HepG2 (cell line): ENCODE measurements at regions of chr17 and their contacts with region 1.

Region 1: GRCh38 chr17:50944054-50944901 is 78.1 kb upstream of the TOB1 start:
- DNase-seq: peak; percentile 97
- ATAC-seq: peak; percentile 85
- H3K4me3 ChIP-seq: peak overlapping the region; percentile 61 to 86 (median 73)
- H3K27ac ChIP-seq: peak overlapping the region; percentile 96
- H3K4me1 ChIP-seq: peaks cover 97% of the 10 kb centered on the region
- H3K27me3 ChIP-seq: no peaks in the 10 kb centered on the region
- CTCF ChIP-seq: peak; percentile 27
- EP300 ChIP-seq: peak; percentile 71 to 96; a peak in 2 of 4 replicates
- POLR2A ChIP-seq: peak; percentile 98 to 99
- RAD21 ChIP-seq: peak; percentile 80

Region 2: GRCh38 chr17:50853015-50853615 is 91.2 kb before region 1 on chr17:
- CTCF ChIA-PET with region 1: interaction called, 23 read pairs
- POLR2A ChIA-PET with region 1: interaction called, 220 read pairs
- in situ Hi-C with region 1: no loop called
- intact Hi-C with region 1: no loop called
- DNase-seq: peak; percentile 74
- ATAC-seq: peak; percentile 46
- H3K4me3 ChIP-seq: peak overlapping the region; percentile 29 to 64 (median 56); a peak in 5 of 6 replicates
- H3K27ac ChIP-seq: peak overlapping the region; percentile 49
- H3K4me1 ChIP-seq: peaks cover 76% of the 10 kb centered on the region
- H3K27me3 ChIP-seq: peaks cover 0 to 8% of the 10 kb centered on the region in 2 experiments; a peak in 2 of 5 replicates
- CTCF ChIP-seq: no peak
- EP300 ChIP-seq: peak in 1 of 2 experiments; percentile 77; a peak in 2 of 4 replicates
- POLR2A ChIP-seq: no peak
- RAD21 ChIP-seq: no peak

Region 3: GRCh38 chr17:50893183-50893993 is 50.9 kb before region 1 on chr17:
- CTCF ChIA-PET with region 1: no interaction called
- POLR2A ChIA-PET with region 1: interaction called, 43 read pairs
- in situ Hi-C with region 1: no loop called
- intact Hi-C with region 1: no loop called
- DNase-seq: peak; percentile 90
- ATAC-seq: peak; percentile 51
- H3K4me3 ChIP-seq: peak overlapping the region; percentile 52 to 72 (median 62)
- H3K27ac ChIP-seq: peak overlapping the region; percentile 84
- H3K4me1 ChIP-seq: peaks cover 81% of the 10 kb centered on the region
- H3K27me3 ChIP-seq: no peaks in the 10 kb centered on the region
- CTCF ChIP-seq: no peak
- EP300 ChIP-seq: peak in 1 of 2 experiments; percentile 86; a peak in 2 of 4 replicates
- POLR2A ChIP-seq: peak in 1 of 2 experiments; percentile 51; a peak in 2 of 4 replicates
- RAD21 ChIP-seq: no peak

Region 4: DNA sequence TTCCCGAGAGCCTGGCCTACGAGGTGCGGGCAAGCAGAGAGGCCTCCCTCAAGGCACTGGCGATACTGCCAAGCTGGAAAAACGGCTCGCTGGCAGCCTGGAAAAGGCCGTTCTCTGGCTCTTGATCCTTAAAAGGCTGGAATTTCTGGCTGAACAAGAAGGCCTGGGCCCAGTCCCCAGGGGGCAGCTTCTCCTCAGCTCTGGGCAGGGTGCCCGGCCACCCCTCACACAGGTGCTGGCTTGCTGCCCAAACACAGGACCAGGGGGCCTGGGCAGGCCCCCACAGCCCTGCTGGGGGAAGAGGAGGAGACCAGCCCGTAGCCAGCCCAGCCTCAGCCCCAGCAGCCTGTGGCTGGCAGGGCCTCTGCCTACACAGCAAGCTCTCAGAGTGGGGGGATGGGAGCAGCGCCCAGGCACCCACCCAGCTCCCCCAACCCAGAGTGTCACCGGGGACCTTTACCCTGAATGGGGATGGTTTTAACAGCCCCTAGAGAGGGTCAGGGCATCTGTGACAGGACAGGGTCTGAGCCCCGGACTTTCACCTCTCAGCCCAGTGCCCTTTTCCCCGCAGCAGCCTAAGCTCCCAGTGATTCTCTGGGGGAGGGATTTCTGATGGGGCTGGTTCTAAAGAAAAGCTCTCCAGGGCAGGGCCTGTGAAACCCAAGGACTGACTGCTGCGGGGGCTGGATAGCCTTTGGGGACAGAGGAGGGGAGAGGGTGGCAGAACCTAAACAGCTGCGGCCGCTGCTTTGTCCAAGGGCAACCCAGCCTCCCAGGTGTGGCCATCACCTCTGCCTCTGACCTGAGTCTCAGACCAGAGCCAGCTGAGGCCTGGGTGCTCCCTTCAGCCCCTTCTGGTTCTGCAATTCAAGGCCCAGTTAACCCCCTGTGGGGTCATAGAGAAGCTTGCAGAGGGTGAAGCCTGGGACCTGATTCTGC is 39.5 kb before region 1 on chr17:
- CTCF ChIA-PET with region 1: no interaction called
- POLR2A ChIA-PET with region 1: interaction called, 125 read pairs
- in situ Hi-C with region 1: loop called (anchors 5 kb)
- intact Hi-C with region 1: loop called (anchors 2 kb)
- DNase-seq: peak; percentile 78
- ATAC-seq: peak; percentile 74
- H3K4me3 ChIP-seq: peak overlapping the region; percentile 48 to 76 (median 52)
- H3K27ac ChIP-seq: peak overlapping the region; percentile 93
- H3K4me1 ChIP-seq: peaks cover 93% of the 10 kb centered on the region
- H3K27me3 ChIP-seq: no peaks in the 10 kb centered on the region
- CTCF ChIP-seq: peak; percentile 51
- EP300 ChIP-seq: peak in 1 of 2 experiments; percentile 58; a peak in 2 of 4 replicates
- POLR2A ChIP-seq: peak in 1 of 2 experiments; percentile 62; a peak in 1 of 4 replicates
- RAD21 ChIP-seq: peak; percentile 31; the same call in 1 of the 2 replicates

Region 5: DNA sequence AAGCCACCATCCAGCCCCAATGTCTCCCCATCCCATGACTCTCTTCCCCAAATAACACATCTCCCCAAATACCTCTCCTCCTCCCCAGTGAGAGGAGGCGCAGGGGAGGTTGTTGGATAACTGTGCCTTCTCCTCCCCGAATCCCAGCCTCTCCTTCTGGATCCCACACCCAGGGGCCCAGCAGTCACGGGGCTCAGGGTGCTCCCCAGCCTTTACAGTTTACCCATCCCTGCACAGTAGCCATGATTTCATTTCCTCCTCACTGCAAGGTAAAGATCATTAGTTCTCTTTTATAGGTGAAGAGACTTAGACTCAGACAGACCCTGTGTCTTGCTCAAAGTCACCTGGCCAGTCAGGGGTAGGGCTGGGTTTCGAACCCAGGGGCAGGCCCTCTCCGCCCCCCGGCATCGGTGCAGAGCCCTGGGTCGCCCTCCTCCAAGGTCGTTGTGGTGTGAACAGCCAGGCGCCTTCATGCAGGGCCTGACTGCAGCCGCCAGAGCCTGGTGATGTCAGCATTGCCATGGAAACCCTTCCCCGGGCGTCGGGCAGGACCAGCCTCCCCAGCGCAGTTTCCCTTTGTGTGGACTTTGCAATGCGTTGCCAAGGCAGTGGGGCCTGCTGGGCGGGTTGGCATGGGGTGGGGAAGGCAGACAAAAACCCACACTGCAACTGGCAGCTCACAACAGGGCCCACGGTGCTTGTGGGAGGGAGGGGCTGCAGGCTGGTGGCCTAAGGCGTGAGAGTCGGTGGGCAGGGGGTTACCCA is 24.8 kb before region 1 on chr17:
- CTCF ChIA-PET with region 1: no interaction called
- POLR2A ChIA-PET with region 1: interaction called, 46 read pairs
- in situ Hi-C with region 1: no loop called
- intact Hi-C with region 1: no loop called
- DNase-seq: peak; percentile 86
- ATAC-seq: peak; percentile 74
- H3K4me3 ChIP-seq: peak overlapping the region in 2 of 3 experiments; percentile 31 to 65; a peak in 3 of 6 replicates
- H3K27ac ChIP-seq: peak overlapping the region; percentile 5
- H3K4me1 ChIP-seq: peaks cover 100% of the 10 kb centered on the region
- H3K27me3 ChIP-seq: 0 out of 5 replicates have a peak, but pooled peaks cover 0 to 2% of the 10 kb centered on the region in 2 experiments
- CTCF ChIP-seq: peak; percentile 19
- EP300 ChIP-seq: no peak
- POLR2A ChIP-seq: no peak
- RAD21 ChIP-seq: 0 out of 2 replicates have a peak, but pooled peaks have one; percentile 9

Region 6: DNA sequence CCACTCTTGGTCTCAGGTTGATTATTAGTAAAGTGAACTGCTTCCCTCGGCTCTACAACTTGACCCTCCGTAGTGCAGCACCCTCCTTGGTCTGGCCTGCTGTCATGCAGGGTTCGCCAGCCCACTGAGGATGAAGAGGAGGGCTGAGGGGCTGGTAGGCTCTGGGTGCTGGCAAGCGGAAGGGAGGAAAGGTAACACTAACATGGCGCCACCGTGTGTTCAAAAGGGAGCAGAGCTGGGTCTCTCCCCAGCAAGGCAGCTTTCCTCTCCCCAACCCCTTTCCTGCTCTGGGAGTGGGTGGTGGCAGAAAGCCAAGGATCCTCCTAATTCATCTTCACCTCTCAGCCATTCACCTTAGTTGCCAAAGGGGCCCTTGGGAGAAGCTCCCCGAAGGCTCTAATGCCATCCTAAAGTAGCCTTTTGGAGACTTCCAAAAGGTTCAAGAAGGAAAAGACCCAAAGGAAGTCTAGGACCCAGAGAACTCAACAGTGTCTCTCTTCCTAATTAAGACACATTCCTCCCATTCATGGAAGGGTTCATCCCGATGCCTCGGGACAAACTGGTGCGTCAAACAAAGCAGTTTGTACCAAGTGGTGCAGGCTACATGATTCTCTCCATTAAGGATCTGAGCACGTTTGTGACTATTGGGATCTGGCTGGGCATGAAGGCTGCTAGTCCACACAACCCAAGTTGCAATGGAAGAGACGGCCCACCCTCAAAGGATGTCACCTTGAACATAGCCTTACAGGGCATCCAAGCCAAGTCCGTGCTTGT is 12.7 kb after region 1 on chr17:
- CTCF ChIA-PET with region 1: no interaction called
- POLR2A ChIA-PET with region 1: interaction called, 12 read pairs
- in situ Hi-C with region 1: no loop called
- intact Hi-C with region 1: no loop called
- DNase-seq: peak; percentile 70
- ATAC-seq: peak; percentile 83
- H3K4me3 ChIP-seq: no peak overlapping the region
- H3K27ac ChIP-seq: no peak overlapping the region
- H3K4me1 ChIP-seq: peaks cover 43% of the 10 kb centered on the region
- H3K27me3 ChIP-seq: no peaks in the 10 kb centered on the region
- CTCF ChIP-seq: peak; percentile 96
- EP300 ChIP-seq: no peak
- POLR2A ChIP-seq: peak in 1 of 2 experiments; percentile 11; a peak in 1 of 4 replicates
- RAD21 ChIP-seq: peak; percentile 93

Region 7: GRCh38 chr17:51006601-51007000 is 62.3 kb after region 1 on chr17:
- CTCF ChIA-PET with region 1: no interaction called
- POLR2A ChIA-PET with region 1: no interaction called
- in situ Hi-C with region 1: no loop called
- intact Hi-C with region 1: no loop called
- DNase-seq: no peak
- ATAC-seq: no peak
- H3K4me3 ChIP-seq: no peak overlapping the region
- H3K27ac ChIP-seq: no peak overlapping the region
- H3K4me1 ChIP-seq: peaks cover 17% of the 10 kb centered on the region
- H3K27me3 ChIP-seq: no peaks in the 10 kb centered on the region
- CTCF ChIP-seq: no peak
- EP300 ChIP-seq: no peak
- POLR2A ChIP-seq: no peak
- RAD21 ChIP-seq: no peak

Region 8: GRCh38 chr17:51056813-51057510 is 112.7 kb after region 1 on chr17:
- CTCF ChIA-PET with region 1: no interaction called
- POLR2A ChIA-PET with region 1: no interaction called
- in situ Hi-C with region 1: no loop called
- intact Hi-C with region 1: no loop called
- DNase-seq: peak; percentile 68
- ATAC-seq: peak; percentile 98
- H3K4me3 ChIP-seq: peak overlapping the region in 1 of 3 experiments; percentile 32; a peak in 1 of 6 replicates
- H3K27ac ChIP-seq: peak overlapping the region; percentile 64
- H3K4me1 ChIP-seq: peaks cover 22% of the 10 kb centered on the region
- H3K27me3 ChIP-seq: no peaks in the 10 kb centered on the region
- CTCF ChIP-seq: peak; percentile 69
- EP300 ChIP-seq: no peak
- POLR2A ChIP-seq: no peak
- RAD21 ChIP-seq: no peak